Left ventricle myocardium inferior (tissue), 1 donor: ENCODE measurements at regions of chr15 and their contacts with region 1.

Region 1: GRCh38 chr15:52780172-52780980 is 9.8 kb downstream of the ONECUT1 start:
- DNase-seq: peak; percentile 55
- H3K4me3 ChIP-seq: peak overlapping the region; percentile 22
- H3K27ac ChIP-seq: no peak overlapping the region
- H3K4me1 ChIP-seq: peaks cover 29% of the 10 kb centered on the region
- H3K27me3 ChIP-seq: peaks cover 99% of the 10 kb centered on the region
- CTCF ChIP-seq: peak; percentile 91

Region 2: DNA sequence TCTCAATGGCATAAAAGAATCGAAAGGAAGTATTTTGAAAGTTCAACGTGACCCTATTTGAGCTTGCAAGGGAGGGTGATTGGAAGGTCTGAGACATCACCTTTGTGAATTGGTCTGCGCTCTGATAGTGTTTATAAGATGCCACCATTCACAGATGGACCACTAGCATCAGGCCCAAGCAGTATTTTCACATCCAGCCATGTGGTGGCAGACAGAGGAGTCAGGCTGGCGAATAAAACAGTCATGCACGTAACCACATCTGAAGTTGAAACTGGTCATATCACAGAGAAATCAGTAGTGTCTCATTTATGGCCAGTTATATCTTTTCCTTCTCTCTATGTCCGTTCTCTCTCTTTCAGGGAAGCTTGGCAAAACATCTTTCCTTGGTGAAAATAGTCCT is 179.9 kb after region 1 on chr15:
- intact Hi-C with region 1: no loop called
- DNase-seq: no peak
- H3K4me3 ChIP-seq: no peak overlapping the region
- H3K27ac ChIP-seq: no peak overlapping the region
- H3K4me1 ChIP-seq: no peaks in the 10 kb centered on the region
- H3K27me3 ChIP-seq: peaks cover 7% of the 10 kb centered on the region
- CTCF ChIP-seq: no peak

Region 3: DNA sequence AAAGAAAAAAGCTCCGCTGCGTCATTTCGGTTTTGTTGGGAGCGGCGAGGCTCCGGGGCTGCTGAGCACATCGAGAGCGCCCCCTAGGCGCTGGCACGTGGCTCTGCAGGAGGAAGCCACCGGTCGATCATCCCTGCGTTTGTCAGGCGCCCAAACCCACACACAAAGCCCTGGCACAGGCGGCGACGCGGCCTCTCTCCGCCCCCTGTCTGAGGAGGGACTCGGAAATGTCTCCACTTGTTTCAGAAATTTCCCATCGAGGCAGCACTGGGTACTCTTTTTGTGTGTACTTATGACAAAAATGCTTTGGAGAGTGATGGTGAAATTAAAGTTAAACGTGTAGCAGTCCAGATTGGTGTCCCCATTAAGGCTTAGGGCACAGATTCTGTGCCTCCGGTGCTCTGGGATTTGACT is 417.1 kb after region 1 on chr15:
- intact Hi-C with region 1: loop called (anchors 10 kb)
- DNase-seq: peak; percentile 27
- H3K4me3 ChIP-seq: no peak overlapping the region
- H3K27ac ChIP-seq: no peak overlapping the region
- H3K4me1 ChIP-seq: peaks cover 3% of the 10 kb centered on the region
- H3K27me3 ChIP-seq: peaks cover 39% of the 10 kb centered on the region
- CTCF ChIP-seq: peak; percentile 81

Region 4: DNA sequence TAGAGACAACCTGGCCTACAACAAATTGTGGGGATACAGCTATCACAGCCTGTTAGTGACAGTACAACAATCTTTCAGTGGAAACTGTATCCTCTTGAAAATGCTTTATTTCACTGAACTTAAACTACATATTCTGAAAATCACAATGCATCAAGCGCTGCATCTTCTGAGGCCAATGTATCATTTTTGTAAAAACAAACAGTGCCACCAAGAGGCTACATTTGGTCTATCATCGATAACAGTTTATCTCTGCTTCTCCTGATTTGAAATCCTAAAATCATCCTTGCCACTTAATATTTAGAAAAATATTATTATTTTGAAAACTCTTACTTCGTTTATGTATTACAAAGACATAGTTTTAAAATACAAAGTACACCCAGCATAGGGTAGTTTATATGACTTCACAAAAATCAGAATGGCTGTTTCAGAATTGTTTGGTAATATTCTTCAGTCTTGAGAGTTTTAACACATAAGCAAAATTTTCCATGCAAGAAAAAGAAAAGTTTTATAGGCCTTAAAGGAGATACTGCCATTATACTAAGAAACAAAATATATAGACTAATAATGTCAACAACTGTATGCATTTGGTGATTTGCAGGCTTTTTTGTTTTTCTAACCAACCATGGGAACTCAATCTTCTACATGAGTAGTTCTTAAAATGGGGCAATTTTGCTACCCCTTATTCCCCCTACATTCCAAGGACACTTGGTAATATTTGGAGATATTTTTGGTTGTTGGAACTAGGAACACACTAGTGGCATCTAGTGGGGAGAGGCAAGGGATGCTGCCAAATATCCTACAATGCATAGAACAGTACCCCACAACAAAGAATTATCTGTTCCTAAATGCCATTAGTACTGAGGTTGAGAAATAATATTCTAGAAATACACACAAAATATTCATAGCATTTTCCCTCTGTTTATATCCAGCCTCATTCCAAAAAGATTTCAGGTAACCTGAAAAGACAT is 936.8 kb after region 1 on chr15:
- intact Hi-C with region 1: loop called (anchors 5 kb)
- DNase-seq: no peak
- H3K4me3 ChIP-seq: no peak overlapping the region
- H3K27ac ChIP-seq: no peak overlapping the region
- H3K4me1 ChIP-seq: no peaks in the 10 kb centered on the region
- H3K27me3 ChIP-seq: peaks cover 19% of the 10 kb centered on the region
- CTCF ChIP-seq: peak; percentile 50